Mammary epithelial cell (primary cell): ENCODE measurements at regions of chr1 and their contacts with region 1.

Region 1: GRCh38 chr1:15206418-15207030 is 40.5 kb upstream of the FHAD1 start:
- DNase-seq: peak; percentile 92
- H3K4me3 ChIP-seq: no peak overlapping the region
- H3K27ac ChIP-seq: no peak overlapping the region
- H3K4me1 ChIP-seq: peaks cover 11% of the 10 kb centered on the region
- H3K27me3 ChIP-seq: no peaks in the 10 kb centered on the region
- CTCF ChIP-seq: no peak

Region 2: GRCh38 chr1:15128520-15129313 is 77.8 kb before region 1 on chr1:
- CTCF ChIA-PET with region 1: no interaction called
- dilution Hi-C with region 1: no loop called
- in situ Hi-C with region 1: no loop called
- intact Hi-C with region 1: loop called (anchors 2 kb)
- DNase-seq: peak; percentile 53
- H3K4me3 ChIP-seq: no peak overlapping the region
- H3K27ac ChIP-seq: no peak overlapping the region
- H3K4me1 ChIP-seq: no peaks in the 10 kb centered on the region
- H3K27me3 ChIP-seq: no peaks in the 10 kb centered on the region
- CTCF ChIP-seq: peak; percentile 87 to 92

Region 3: GRCh38 chr1:15168479-15168878 is 38.0 kb before region 1 on chr1:
- CTCF ChIA-PET with region 1: no interaction called
- dilution Hi-C with region 1: no loop called
- in situ Hi-C with region 1: no loop called
- intact Hi-C with region 1: loop called (anchors 1 kb)
- DNase-seq: peak; percentile 99
- H3K4me3 ChIP-seq: no peak overlapping the region
- H3K27ac ChIP-seq: peak overlapping the region; percentile 91
- H3K4me1 ChIP-seq: peaks cover 33% of the 10 kb centered on the region
- H3K27me3 ChIP-seq: no peaks in the 10 kb centered on the region
- CTCF ChIP-seq: peak; percentile 19 to 25

Region 4: GRCh38 chr1:15178571-15179484 is 27.7 kb before region 1 on chr1:
- CTCF ChIA-PET with region 1: no interaction called
- dilution Hi-C with region 1: no loop called
- in situ Hi-C with region 1: no loop called
- intact Hi-C with region 1: loop called (anchors 2 kb)
- DNase-seq: peak; percentile 97
- H3K4me3 ChIP-seq: no peak overlapping the region
- H3K27ac ChIP-seq: peak overlapping the region; percentile 75
- H3K4me1 ChIP-seq: peaks cover 44% of the 10 kb centered on the region
- H3K27me3 ChIP-seq: no peaks in the 10 kb centered on the region
- CTCF ChIP-seq: no peak

Region 5: DNA sequence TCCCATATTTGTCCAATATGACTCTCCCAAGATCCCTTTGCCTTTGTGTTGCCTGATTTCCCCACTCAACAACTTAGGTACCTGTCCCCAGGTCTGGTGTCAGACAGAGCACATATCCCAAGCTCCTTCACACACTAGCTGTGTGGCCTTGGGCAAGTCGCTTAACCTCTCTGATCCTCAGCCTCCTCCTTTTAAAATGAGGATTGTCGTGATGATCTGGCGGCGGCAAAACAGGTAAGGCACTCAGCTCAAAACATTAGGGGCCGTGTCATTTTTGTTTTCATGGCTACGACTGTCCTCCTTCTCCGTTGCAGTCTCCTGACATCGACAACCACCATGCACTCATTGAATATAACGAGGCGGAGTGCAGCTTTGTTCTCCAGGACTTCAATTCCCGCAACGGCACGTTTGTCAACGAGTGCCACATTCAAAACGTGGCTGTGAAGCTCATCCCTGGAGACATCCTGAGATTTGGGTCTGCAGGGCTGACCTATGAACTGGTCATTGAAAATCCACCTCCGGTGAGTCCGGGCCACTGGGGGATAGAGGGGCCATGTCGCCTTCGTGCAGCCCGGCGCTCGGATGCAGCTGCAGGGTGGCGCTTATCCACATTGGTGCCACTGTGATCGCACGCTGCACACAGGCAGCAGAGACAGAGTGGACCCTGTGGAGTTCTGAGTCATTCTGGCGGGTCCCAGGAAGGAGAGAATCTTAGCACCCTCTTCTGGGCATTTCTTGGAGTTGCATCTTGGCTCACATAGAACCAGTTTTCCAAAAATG is 65.7 kb after region 1 on chr1:
- CTCF ChIA-PET with region 1: no interaction called
- dilution Hi-C with region 1: no loop called
- in situ Hi-C with region 1: no loop called
- intact Hi-C with region 1: loop called (anchors 2 kb)
- DNase-seq: peak; percentile 70
- H3K4me3 ChIP-seq: no peak overlapping the region
- H3K27ac ChIP-seq: no peak overlapping the region
- H3K4me1 ChIP-seq: peaks cover 4% of the 10 kb centered on the region
- H3K27me3 ChIP-seq: no peaks in the 10 kb centered on the region
- CTCF ChIP-seq: peak; percentile 62 to 85